ENCODE measurements at regions of chr17 and their contacts with region 1.

Region 1: DNA sequence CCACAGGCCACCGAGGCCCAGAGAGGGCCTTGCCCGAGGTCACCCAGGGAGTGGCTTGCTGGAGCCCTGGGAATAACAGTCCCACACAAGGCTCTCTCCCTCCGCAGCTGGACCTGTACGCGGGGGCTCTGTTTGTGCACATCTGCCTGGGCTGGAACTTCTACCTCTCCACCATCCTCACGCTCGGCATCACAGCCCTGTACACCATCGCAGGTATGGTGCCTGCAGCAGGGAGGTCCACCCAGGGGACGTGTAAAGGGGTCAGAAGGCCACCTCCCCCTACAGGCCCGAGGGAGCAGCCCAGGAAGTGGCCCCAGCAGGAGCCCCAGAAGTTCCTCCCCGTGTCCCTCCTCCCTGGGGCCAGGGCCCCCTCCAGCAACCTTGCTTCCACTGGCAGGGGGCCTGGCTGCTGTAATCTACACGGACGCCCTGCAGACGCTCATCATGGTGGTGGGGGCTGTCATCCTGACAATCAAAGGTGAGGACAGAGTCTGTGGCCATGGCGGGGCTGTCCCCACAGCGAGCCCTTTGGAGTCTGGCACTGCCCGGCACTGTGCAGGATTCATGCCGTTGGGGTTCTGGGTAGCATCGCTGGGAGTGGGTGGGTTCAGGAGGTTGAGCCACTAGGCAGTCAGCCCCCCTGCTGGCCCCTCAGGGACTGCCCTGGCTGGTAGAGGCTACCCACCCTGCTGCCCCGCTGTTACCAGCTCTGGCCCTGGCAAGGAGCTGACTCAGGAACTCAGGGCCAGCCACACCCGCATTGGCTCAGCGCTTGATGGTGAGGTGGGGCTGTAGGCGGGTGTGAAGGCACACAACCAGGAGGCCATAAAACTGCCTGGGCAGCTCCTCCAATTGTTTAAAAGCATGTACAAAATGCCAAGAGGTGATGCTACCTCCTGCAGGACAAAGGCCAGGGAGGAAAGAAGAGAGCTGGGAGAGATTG is 17.3 kb downstream of the SLC5A10 start:
- DNase-seq: peak; percentile 54 to 58
- ATAC-seq: peak; percentile 9 to 53; a peak in 3 of 6 replicates
- H3K4me3 ChIP-seq: no peak overlapping the region
- H3K27ac ChIP-seq: peak overlapping the region in 1 of 2 experiments; percentile 73; a peak in 3 of 6 replicates
- H3K4me1 ChIP-seq: peaks cover 40% of the 10 kb centered on the region
- CTCF ChIP-seq: no peak
- EP300 ChIP-seq: no peak
- POLR2A ChIP-seq: no peak
- RAD21 ChIP-seq: no peak

Region 2: DNA sequence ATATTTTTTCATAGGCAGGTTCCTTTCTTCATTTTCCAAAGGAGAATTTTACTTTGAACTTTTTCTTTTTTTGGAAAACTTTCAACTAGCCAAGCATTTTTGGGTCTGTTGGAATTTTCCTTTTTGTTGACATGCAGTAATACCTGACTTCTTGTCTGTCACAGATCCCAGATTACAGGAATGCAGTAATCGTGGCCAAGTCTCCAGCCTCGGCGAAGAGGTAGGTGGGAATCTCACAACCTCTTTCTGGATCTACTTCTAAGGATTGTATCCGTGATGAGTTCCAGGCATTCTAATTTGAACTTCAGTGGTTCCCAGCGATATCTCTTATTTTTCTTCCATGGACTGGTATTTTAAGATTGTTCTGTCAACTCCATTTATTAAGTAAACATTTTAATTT is 79.6 kb before region 1 on chr17:
- CTCF ChIA-PET with region 1: no interaction called
- POLR2A ChIA-PET with region 1: no interaction called
- DNase-seq: no peak
- ATAC-seq: no peak
- H3K4me3 ChIP-seq: no peak overlapping the region
- H3K27ac ChIP-seq: no peak overlapping the region
- H3K4me1 ChIP-seq: no peaks in the 10 kb centered on the region
- CTCF ChIP-seq: no peak
- EP300 ChIP-seq: no peak
- POLR2A ChIP-seq: no peak
- RAD21 ChIP-seq: no peak

Region 3: GRCh38 chr17:18981642-18982424 is 12.6 kb after region 1 on chr17:
- CTCF ChIA-PET with region 1: interaction called, 215 read pairs
- POLR2A ChIA-PET with region 1: no interaction called
- DNase-seq: peak; percentile 76 to 82
- ATAC-seq: peak; percentile 65 to 75
- H3K4me3 ChIP-seq: no peak overlapping the region
- H3K27ac ChIP-seq: peak overlapping the region; percentile 72 to 88
- H3K4me1 ChIP-seq: peaks cover 24% of the 10 kb centered on the region
- CTCF ChIP-seq: no peak
- EP300 ChIP-seq: no peak
- POLR2A ChIP-seq: no peak
- RAD21 ChIP-seq: no peak